ENCODE measurements at regions of chr2 and their contacts with region 1.

Region 1: GRCh38 chr2:143259368-143259958 is 130.2 kb downstream of the ARHGAP15 start:
- DNase-seq: no peak
- ATAC-seq: peak; percentile 29
- H3K4me3 Mint-ChIP-seq: no peak overlapping the region
- H3K27ac Mint-ChIP-seq: peak overlapping the region; percentile 81
- H3K4me1 Mint-ChIP-seq: peaks cover 70% of the 10 kb centered on the region
- H3K27me3 Mint-ChIP-seq: no peaks in the 10 kb centered on the region
- CTCF ChIP-seq: no peak

Region 2: GRCh38 chr2:142170847-142171246 is 1088.6 kb before region 1 on chr2:
- CTCF ChIA-PET with region 1: no interaction called
- POLR2A ChIA-PET with region 1: interaction called, 10 read pairs
- intact Hi-C with region 1: no loop called
- DNase-seq: no peak
- ATAC-seq: no peak
- H3K4me3 Mint-ChIP-seq: no peak overlapping the region
- H3K27ac Mint-ChIP-seq: no peak overlapping the region
- H3K4me1 Mint-ChIP-seq: no peaks in the 10 kb centered on the region
- H3K27me3 Mint-ChIP-seq: no peaks in the 10 kb centered on the region
- CTCF ChIP-seq: no peak

Region 3: DNA sequence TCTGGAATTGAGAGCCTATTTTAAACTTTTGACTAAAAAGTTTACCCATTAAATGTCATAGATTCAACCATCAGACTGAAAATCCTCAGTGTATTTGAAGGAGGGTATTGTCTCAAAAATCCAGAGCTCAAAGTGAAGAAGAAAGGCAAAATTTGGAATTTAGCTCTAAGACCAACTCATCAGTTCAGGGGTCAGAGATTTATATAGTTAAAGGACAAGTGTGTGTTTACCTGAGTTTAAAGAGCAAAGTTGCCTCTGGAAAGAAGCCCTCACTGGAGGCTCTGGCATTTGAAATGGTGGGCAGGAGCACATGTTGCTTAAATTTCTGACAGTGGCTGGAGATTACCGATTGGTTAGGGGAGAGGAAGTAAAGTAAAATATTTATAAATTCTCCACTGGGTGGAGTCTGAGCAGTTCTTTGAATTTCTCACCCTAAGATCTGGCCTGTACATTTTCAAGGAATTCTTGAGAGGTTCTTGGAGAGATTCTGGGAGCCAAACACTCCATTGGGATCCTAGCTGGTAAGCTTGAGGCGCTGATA is 382.2 kb before region 1 on chr2 and contains the start of gene KYNU:
- CTCF ChIA-PET with region 1: no interaction called
- POLR2A ChIA-PET with region 1: no interaction called
- intact Hi-C with region 1: loop called (anchors 5 kb)
- DNase-seq: no peak
- ATAC-seq: peak; percentile 78
- H3K4me3 Mint-ChIP-seq: peak within 1 kb of the TSS; percentile 83
- H3K27ac Mint-ChIP-seq: peak within 1 kb of the TSS; percentile 90
- H3K4me1 Mint-ChIP-seq: peaks cover 82% of the 10 kb centered on the region
- H3K27me3 Mint-ChIP-seq: no peaks in the 10 kb centered on the region
- CTCF ChIP-seq: no peak
- total RNA-seq, gene KYNU: 43.8 and 48.0 TPM in 2 replicates

Region 4: GRCh38 chr2:143110758-143111428 is 148.6 kb before region 1 on chr2:
- CTCF ChIA-PET with region 1: interaction called, 122 read pairs
- POLR2A ChIA-PET with region 1: interaction called, 4 read pairs
- intact Hi-C with region 1: loop called (anchors 1 kb)
- DNase-seq: no peak
- ATAC-seq: peak; percentile 81
- H3K4me3 Mint-ChIP-seq: no peak overlapping the region
- H3K27ac Mint-ChIP-seq: peak overlapping the region; percentile 50
- H3K4me1 Mint-ChIP-seq: peaks cover 8% of the 10 kb centered on the region
- H3K27me3 Mint-ChIP-seq: no peaks in the 10 kb centered on the region
- CTCF ChIP-seq: peak; percentile 77

Region 5: DNA sequence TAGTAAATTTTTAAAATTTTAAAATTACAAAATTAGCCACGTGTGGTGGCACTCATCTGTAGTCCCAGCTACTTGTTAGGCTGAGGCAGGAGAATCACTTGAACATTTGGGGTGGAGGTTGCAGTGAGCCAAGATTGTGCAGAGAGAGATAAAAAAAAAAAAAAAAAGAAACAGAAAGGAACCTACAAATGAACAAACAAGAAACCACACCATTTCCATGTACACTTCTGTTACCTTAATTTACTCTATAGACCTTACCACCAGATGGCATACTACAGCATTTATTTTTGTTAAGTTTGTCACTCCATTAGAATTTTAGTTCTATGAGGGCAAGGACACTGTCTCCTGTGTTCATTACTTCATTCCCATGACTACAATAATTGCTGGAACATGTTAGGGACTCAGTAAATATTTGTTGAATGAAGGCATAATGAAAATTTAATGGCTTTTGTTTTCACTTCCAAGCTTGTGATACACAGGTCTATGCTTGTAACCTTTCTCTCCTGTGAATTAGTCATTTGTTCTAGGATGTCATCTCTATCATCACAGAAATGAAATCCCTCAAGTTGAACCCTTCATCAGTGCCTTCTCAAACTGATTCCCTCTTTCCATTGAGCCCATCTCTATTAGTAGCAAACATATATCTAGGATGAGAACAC is 54.2 kb before region 1 on chr2:
- CTCF ChIA-PET with region 1: interaction called, 37 read pairs
- POLR2A ChIA-PET with region 1: interaction called, 9 read pairs
- intact Hi-C with region 1: loop called (anchors 1 kb)
- DNase-seq: no peak
- ATAC-seq: peak; percentile 42
- H3K4me3 Mint-ChIP-seq: no peak overlapping the region
- H3K27ac Mint-ChIP-seq: peak overlapping the region; percentile 26
- H3K4me1 Mint-ChIP-seq: peaks cover 28% of the 10 kb centered on the region
- H3K27me3 Mint-ChIP-seq: no peaks in the 10 kb centered on the region
- CTCF ChIP-seq: no peak

Region 6: DNA sequence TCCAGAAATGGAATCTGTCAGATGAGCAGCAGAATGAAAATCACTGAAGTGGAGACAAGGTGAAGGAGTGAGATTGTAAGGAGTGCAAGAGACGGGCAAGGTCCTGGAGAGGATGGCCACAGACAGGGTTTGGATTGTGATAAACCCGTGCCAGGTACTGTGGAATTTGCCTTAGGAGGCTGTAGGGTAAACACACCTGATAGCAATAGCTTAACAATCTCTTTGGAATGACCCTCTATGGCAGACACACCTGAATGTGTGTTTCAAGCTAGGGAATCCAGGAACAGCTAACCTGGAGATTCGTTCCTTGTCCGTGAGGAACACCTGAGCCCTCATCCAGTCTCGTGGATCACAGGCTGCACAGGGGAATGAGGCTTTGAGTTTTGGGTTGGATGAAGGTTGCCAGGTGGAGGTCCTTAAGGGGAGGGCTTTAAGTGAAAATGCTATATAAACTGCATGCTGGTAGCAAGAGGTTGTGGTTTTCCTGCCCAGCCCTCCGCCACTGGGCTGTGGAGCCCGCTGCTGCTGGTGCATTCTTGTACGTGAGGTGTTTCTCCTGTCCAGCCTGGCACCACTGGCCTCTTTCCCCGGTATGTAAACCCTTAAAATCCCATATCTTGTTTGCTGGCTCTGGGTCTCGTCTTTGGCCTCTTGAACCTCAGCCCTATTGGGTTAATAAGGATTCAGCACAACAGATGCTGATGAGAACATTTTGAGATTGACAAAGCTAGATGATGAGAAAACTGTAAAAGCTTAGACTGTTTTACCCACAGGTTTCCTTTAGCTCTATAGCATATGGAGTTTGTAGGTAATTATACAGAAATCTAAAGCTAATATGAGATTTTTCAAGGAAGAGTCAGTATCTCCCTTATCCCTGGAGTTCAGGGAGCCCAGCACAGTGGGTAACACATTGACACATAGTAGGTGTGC is 12.4 kb before region 1 on chr2:
- CTCF ChIA-PET with region 1: interaction called, 19 read pairs
- POLR2A ChIA-PET with region 1: interaction called, 6 read pairs
- intact Hi-C with region 1: no loop called
- DNase-seq: no peak
- ATAC-seq: no peak
- H3K4me3 Mint-ChIP-seq: no peak overlapping the region
- H3K27ac Mint-ChIP-seq: peak overlapping the region; percentile 65
- H3K4me1 Mint-ChIP-seq: peaks cover 21% of the 10 kb centered on the region
- H3K27me3 Mint-ChIP-seq: no peaks in the 10 kb centered on the region
- CTCF ChIP-seq: no peak

Region 7: DNA sequence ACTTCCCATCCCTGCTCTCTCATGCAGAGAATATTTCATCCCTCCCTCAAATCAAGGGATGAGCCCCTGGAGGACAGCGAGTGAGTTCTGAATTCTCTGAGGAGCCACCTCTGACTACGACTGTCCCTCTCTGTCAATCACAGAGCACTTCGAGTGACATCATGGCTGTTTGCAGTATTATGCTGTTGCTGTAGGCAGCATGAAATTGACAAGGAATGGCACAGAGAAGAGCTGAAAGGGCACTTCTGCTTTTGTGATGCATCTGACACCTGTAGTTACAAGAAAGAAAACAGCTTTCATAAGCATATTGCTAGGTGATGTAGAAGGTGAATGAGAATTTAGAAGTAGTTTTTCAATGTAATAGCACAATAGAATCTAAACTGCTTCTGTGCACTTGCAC is 36.6 kb after region 1 on chr2:
- CTCF ChIA-PET with region 1: no interaction called
- POLR2A ChIA-PET with region 1: interaction called, 11 read pairs
- intact Hi-C with region 1: no loop called
- DNase-seq: no peak
- ATAC-seq: peak; percentile 71
- H3K4me3 Mint-ChIP-seq: no peak overlapping the region
- H3K27ac Mint-ChIP-seq: peak overlapping the region; percentile 73
- H3K4me1 Mint-ChIP-seq: peaks cover 12% of the 10 kb centered on the region
- H3K27me3 Mint-ChIP-seq: no peaks in the 10 kb centered on the region
- CTCF ChIP-seq: no peak

Measured in activated B cell treated with CpG ODN at 0.5 μM for 24 hours (primary cell).